ENCODE measurements at regions of chr7 and their contacts with region 1.

Region 1: DNA sequence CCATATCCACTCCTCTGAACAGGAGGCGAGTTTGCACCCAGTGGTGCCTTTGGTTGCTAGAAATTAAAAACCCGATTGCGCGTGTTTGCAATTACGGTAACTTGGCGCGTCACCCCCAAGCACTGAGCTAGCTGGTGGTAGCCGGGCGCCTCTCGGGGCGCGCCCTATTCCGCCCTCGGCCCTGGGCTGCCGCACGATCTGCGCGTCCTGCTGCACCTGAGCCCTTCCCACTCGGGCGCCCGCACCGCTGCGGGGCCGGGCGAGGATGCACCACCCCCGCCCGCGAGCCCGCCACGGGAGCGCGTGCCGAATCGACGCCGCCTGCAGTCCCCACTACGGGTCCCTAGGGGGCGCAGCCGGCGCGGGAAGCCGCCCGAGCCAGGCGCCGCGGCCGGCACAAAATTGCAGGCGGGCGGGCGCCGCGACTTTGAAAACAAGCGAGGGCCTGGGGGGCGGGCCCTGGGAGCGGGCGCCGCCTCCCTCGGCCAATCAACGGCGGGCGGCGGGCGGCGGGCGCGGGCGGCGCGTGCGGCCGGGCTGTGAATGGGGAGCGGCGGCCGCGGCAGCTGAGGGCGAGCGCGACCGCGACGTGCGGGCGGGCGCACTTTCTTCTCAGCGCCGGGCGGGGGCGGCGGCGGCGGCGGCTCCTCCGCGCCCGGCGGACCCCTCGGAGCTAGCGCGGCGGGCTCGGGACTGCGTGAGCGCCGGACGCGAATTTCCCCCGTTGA is at the start of gene SDK1:
- DNase-seq: peak; percentile 78 to 98 (median 85)

Region 2: GRCh38 chr7:3321206-3321605 is 20.4 kb after region 1 on chr7:
- intact Hi-C with region 1: no loop called
- DNase-seq: no peak

Region 3: DNA sequence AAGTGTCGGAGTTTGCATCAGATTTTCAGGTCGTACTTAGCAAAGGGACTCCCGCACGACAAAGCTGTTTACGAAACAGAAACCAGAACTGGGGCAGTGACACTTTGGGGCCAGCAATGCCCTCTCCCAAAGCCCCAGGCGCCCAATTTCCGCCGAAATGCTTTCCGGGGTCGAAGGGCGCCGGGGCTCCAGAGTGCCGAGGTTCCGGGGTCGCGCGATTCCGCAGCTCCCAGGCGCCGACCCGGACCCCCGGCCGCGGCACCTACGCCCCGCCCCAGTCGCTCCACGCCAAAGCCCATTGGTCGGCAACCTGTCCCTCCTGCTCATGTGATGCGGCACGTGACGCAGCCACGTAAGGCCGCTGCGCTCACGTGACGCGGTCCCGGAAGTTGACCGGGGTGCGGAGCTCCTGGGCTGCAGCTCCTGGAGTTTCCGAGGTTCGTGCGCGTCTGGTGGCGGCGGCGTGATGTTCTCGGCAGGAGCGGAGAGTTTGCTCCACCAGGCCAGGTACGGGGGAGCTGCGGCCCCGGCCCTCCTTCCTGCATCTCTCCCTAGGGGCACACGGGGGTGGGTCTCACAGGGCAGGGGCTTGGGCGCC is 1474.5 kb after region 1 on chr7 and contains the start of gene AP5Z1:
- intact Hi-C with region 1: loop called (anchors 10 kb)
- DNase-seq: peak; percentile 96 to 100 (median 98)